Naive thymus-derived CD4-positive, alpha-beta T cell (primary cell): ENCODE measurements at regions of chr5 and their contacts with region 1.

Region 1: GRCh38 chr5:134140530-134141201 is 26.2 kb downstream of the TCF7 start:
- DNase-seq: peak in 5 of 9 donors; percentile 30 to 63 (median 50)
- ATAC-seq: peak; percentile 67
- H3K4me3 ChIP-seq: no peak overlapping the region
- H3K4me3 Mint-ChIP-seq: peak overlapping the region in 5 of 10 donors; percentile 21 to 58 (median 41)
- H3K27ac ChIP-seq: peak overlapping the region; percentile 97
- H3K27ac Mint-ChIP-seq: peak overlapping the region; percentile 60 to 99 (median 90)
- H3K4me1 ChIP-seq: peaks cover 38 to 61% of the 10 kb centered on the region in 2 donors
- H3K4me1 Mint-ChIP-seq: peaks cover 36 to 81% (median 60%) of the 10 kb centered on the region in 7 donors
- H3K27me3 ChIP-seq: no peaks in the 10 kb centered on the region
- H3K27me3 Mint-ChIP-seq: peaks cover 0 to under 1% (median 0%) of the 10 kb centered on the region in 5 donors

Region 2: GRCh38 chr5:134125039-134126015 is 15.3 kb before region 1 on chr5:
- CTCF ChIA-PET with region 1: interaction called, 394 read pairs
- POLR2A ChIA-PET with region 1: no interaction called
- intact Hi-C with region 1: loop called in 1 of 2 experiments (anchors 1 kb)
- DNase-seq: no peak
- ATAC-seq: no peak
- H3K4me3 ChIP-seq: peak overlapping the region; percentile 86
- H3K4me3 Mint-ChIP-seq: peak overlapping the region; percentile 93 to 100 (median 98)
- H3K27ac ChIP-seq: peak overlapping the region; percentile 97
- H3K27ac Mint-ChIP-seq: peak overlapping the region; percentile 80 to 99 (median 98)
- H3K4me1 ChIP-seq: peaks cover 61 to 100% of the 10 kb centered on the region in 2 donors
- H3K4me1 Mint-ChIP-seq: peaks cover 31 to 91% (median 69%) of the 10 kb centered on the region in 7 donors
- H3K27me3 ChIP-seq: no peaks in the 10 kb centered on the region
- H3K27me3 Mint-ChIP-seq: peaks cover 0 to 3% (median 0%) of the 10 kb centered on the region in 5 donors

Region 3: GRCh38 chr5:134153657-134154056 is 13.0 kb after region 1 on chr5:
- CTCF ChIA-PET with region 1: interaction called, 4 read pairs
- POLR2A ChIA-PET with region 1: interaction called, 12 read pairs
- intact Hi-C with region 1: no loop called
- DNase-seq: peak in 1 of 9 donors; percentile 6
- ATAC-seq: no peak
- H3K4me3 ChIP-seq: no peak overlapping the region
- H3K4me3 Mint-ChIP-seq: peak overlapping the region in 5 of 10 donors; percentile 29 to 81 (median 51)
- H3K27ac ChIP-seq: no peak overlapping the region
- H3K27ac Mint-ChIP-seq: peak overlapping the region in 8 of 9 donors; percentile 55 to 91 (median 86)
- H3K4me1 ChIP-seq: peaks cover 5 to 56% of the 10 kb centered on the region in 2 donors
- H3K4me1 Mint-ChIP-seq: peaks cover 43 to 95% (median 90%) of the 10 kb centered on the region in 7 donors
- H3K27me3 ChIP-seq: no peaks in the 10 kb centered on the region
- H3K27me3 Mint-ChIP-seq: no peaks in the 10 kb centered on the region

Region 4: DNA sequence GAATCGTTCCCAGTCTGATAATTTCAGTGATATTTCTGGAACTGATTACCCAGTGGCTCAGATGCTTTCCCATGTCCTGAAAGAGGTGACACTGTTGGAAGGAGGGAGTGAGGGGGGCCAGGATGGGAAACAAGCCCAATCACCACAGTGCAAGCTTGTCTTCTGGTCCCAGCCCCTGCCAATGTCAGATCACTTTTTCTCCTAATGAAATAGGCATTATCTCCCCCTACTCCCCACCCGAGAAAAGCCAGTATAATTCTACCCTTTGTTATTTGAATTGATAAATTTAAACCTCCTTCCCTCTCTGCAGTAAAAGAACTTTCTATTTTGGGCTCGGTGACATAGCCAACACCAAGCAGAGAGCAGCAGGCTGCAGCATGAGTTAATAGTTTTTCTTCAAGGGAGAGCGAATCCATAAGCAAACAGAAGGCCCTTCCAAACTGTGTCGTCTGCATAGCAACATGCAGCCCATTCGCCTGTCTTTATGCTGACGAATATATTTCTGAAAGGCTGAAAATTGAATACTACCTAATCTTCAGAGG is 99.8 kb after region 1 on chr5:
- CTCF ChIA-PET with region 1: no interaction called
- POLR2A ChIA-PET with region 1: no interaction called
- intact Hi-C with region 1: no loop called
- DNase-seq: no peak
- ATAC-seq: no peak
- H3K4me3 ChIP-seq: no peak overlapping the region
- H3K4me3 Mint-ChIP-seq: no peak overlapping the region
- H3K27ac ChIP-seq: no peak overlapping the region
- H3K27ac Mint-ChIP-seq: no peak overlapping the region
- H3K4me1 ChIP-seq: no peaks in the 10 kb centered on the region
- H3K4me1 Mint-ChIP-seq: no peaks in the 10 kb centered on the region
- H3K27me3 ChIP-seq: no peaks in the 10 kb centered on the region
- H3K27me3 Mint-ChIP-seq: peaks cover 0 to 29% (median 0%) of the 10 kb centered on the region in 5 donors

Region 5: DNA sequence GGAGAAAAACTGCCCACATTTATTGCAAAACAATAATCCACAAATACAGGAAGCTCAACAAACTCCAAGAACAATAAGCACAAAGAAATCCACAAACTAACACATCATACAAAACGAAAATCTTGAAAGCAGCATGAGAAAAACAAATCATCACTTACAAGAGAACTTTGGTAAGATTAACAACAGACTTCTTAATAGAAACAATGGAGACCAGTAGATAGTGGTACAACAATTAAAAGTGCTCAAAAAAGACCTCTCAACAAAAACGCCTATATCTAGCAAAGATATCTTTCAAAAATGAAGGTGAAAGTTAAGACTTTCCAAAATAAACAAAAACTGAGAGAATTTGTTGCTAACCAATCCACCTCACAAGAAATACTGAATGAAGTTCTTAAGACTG is 188.0 kb after region 1 on chr5:
- CTCF ChIA-PET with region 1: no interaction called
- POLR2A ChIA-PET with region 1: no interaction called
- intact Hi-C with region 1: no loop called
- DNase-seq: no peak
- ATAC-seq: no peak
- H3K4me3 ChIP-seq: no peak overlapping the region
- H3K4me3 Mint-ChIP-seq: no peak overlapping the region
- H3K27ac ChIP-seq: no peak overlapping the region
- H3K27ac Mint-ChIP-seq: no peak overlapping the region
- H3K4me1 ChIP-seq: no peaks in the 10 kb centered on the region
- H3K4me1 Mint-ChIP-seq: no peaks in the 10 kb centered on the region
- H3K27me3 ChIP-seq: no peaks in the 10 kb centered on the region
- H3K27me3 Mint-ChIP-seq: peaks cover 0 to 21% (median 0%) of the 10 kb centered on the region in 5 donors